Endothelial cell of umbilical vein (primary cell): ENCODE measurements at regions of chr2 and their contacts with region 1.

Region 1: DNA sequence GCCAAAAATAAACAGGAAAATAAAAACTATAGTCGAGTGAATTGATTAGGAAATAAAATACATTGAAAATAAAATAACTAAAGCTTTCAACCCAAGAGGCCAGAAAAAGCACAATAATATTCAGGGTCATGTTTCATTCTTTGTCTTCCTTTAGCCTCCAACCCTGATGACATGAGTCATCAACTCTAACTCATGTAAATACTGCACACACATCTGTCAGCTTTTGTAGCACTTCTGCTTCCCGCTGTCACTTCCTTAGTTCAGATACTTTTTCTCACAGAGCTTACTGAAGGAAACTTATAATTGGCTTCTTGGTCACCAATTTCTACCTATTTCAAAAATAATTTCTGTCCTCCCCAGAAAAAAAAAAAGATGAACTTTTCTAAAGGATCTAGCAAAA is 112.8 kb downstream of the UPP2 start:
- DNase-seq: peak; percentile 82
- H3K4me3 ChIP-seq: no peak overlapping the region
- H3K27ac ChIP-seq: peak overlapping the region; percentile 63
- H3K4me1 ChIP-seq: peaks cover 8% of the 10 kb centered on the region
- H3K27me3 ChIP-seq: peaks cover 3 to 4% of the 10 kb centered on the region in 2 experiments
- CTCF ChIP-seq: no peak
- POLR2A ChIP-seq: no peak

Region 2: GRCh38 chr2:158191076-158191895 is 23.2 kb before region 1 on chr2:
- CTCF ChIA-PET with region 1: no interaction called
- POLR2A ChIA-PET with region 1: no interaction called
- dilution Hi-C with region 1: no loop called
- intact Hi-C with region 1: no loop called
- DNase-seq: no peak
- H3K4me3 ChIP-seq: no peak overlapping the region
- H3K27ac ChIP-seq: no peak overlapping the region
- H3K4me1 ChIP-seq: peaks cover 22% of the 10 kb centered on the region
- H3K27me3 ChIP-seq: peaks cover 2 to 4% of the 10 kb centered on the region in 2 experiments
- CTCF ChIP-seq: no peak
- POLR2A ChIP-seq: no peak

Region 3: DNA sequence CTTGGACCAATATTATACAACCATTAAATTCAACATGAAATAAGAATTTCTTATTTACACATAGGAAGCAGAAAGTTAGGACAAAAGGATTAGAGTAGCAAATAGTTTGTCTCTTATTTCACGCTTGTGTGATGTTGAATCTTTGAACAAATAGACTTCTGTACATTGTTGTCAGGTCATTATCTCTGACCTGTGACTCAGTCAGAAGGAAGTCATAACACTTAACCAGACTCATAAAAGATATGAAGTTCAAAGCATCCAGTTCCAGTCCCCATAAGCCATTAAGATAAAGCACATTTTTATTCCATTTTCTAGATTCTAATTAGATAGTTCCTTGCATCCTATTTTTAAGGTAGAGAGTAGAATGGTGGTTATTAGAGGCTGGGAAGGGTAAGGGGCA is 18.0 kb after region 1 on chr2:
- CTCF ChIA-PET with region 1: interaction called, 6 read pairs
- POLR2A ChIA-PET with region 1: no interaction called
- dilution Hi-C with region 1: no loop called
- intact Hi-C with region 1: loop called (anchors 2 kb)
- DNase-seq: peak; percentile 55
- H3K4me3 ChIP-seq: no peak overlapping the region
- H3K27ac ChIP-seq: no peak overlapping the region
- H3K4me1 ChIP-seq: peaks cover 2% of the 10 kb centered on the region
- H3K27me3 ChIP-seq: peaks cover 23 to 67% of the 10 kb centered on the region in 2 experiments
- CTCF ChIP-seq: no peak
- POLR2A ChIP-seq: no peak